Right ventricle myocardium superior (tissue), 1 donor: ENCODE measurements at regions of chr9 and their contacts with region 1.

Region 1: GRCh38 chr9:23361096-23361495 is 464.9 kb downstream of the ELAVL2 start:
- DNase-seq: no peak
- ATAC-seq: no peak

Region 2: GRCh38 chr9:23379842-23380241 is 18.7 kb after region 1 on chr9:
- intact Hi-C with region 1: loop called (anchors 2 kb)
- DNase-seq: no peak
- ATAC-seq: no peak